Caco-2 (cell line): ENCODE measurements at regions of chr20 and their contacts with region 1.

Region 1: GRCh38 chr20:45392733-45393132 is 14.6 kb upstream of the TP53TG5 start:
- DNase-seq: peak in 1 of 2 experiments; percentile 46
- H3K4me3 ChIP-seq: no peak overlapping the region
- H3K4me3 Mint-ChIP-seq: no peak overlapping the region
- H3K27ac Mint-ChIP-seq: no peak overlapping the region
- H3K4me1 ChIP-seq: no peaks in the 10 kb centered on the region
- H3K4me1 Mint-ChIP-seq: no peaks in the 10 kb centered on the region
- H3K27me3 ChIP-seq: no peaks in the 10 kb centered on the region
- H3K27me3 Mint-ChIP-seq: peaks cover 2% of the 10 kb centered on the region
- CTCF ChIP-seq: no peak

Region 2: GRCh38 chr20:45283548-45284057 is 109.1 kb before region 1 on chr20:
- CTCF ChIA-PET with region 1: no interaction called
- POLR2A ChIA-PET with region 1: no interaction called
- intact Hi-C with region 1: no loop called
- DNase-seq: no peak
- H3K4me3 ChIP-seq: no peak overlapping the region
- H3K4me3 Mint-ChIP-seq: no peak overlapping the region
- H3K27ac Mint-ChIP-seq: no peak overlapping the region
- H3K4me1 ChIP-seq: no peaks in the 10 kb centered on the region
- H3K4me1 Mint-ChIP-seq: no peaks in the 10 kb centered on the region
- H3K27me3 ChIP-seq: no peaks in the 10 kb centered on the region; the same call in 1 of the 2 replicates
- H3K27me3 Mint-ChIP-seq: peaks cover 34% of the 10 kb centered on the region
- CTCF ChIP-seq: no peak

Region 3: GRCh38 chr20:45373353-45374100 is 19.2 kb before region 1 on chr20:
- CTCF ChIA-PET with region 1: interaction called, 11 read pairs
- POLR2A ChIA-PET with region 1: no interaction called
- intact Hi-C with region 1: no loop called
- DNase-seq: peak; percentile 85 to 90
- H3K4me3 ChIP-seq: no peak overlapping the region
- H3K4me3 Mint-ChIP-seq: peak overlapping the region; percentile 64
- H3K27ac Mint-ChIP-seq: no peak overlapping the region
- H3K4me1 ChIP-seq: no peaks in the 10 kb centered on the region
- H3K4me1 Mint-ChIP-seq: no peaks in the 10 kb centered on the region
- H3K27me3 ChIP-seq: no peaks in the 10 kb centered on the region
- H3K27me3 Mint-ChIP-seq: no peaks in the 10 kb centered on the region
- CTCF ChIP-seq: peak; percentile 90 to 93

Region 4: DNA sequence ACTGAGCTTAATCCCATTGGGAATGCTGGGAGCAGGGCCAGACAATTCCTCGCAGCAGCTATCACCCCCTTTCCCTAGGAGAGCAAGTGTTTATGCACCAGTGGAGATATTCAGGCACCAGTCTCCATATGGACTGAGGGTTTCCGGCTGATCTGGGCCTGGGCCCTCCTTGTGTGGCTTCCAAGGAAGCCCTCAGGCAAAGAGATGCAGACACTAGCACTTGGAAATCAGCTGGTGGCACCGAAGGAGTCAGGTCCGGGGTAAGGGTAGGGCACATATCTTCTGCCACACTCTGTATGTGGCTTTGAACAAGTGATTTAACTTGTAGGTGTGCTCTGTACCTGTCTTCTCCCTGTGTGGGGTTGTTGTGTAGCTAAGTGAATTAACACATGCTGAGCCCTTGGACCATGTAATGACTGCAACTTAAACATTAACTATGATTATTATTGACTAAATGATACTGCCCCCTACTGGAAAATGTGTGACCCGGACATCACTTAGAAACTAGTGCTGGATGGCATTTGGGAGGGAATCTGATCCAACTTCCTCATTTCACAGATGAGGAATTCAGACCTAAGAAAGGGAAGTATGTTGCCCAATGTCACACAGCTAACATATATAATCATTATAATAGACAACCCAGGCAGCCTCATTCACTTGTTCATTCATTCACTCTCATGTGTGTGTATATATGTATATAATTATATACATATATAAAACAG is 57.5 kb after region 1 on chr20:
- CTCF ChIA-PET with region 1: interaction called, 10 read pairs
- POLR2A ChIA-PET with region 1: no interaction called
- intact Hi-C with region 1: no loop called
- DNase-seq: peak in 1 of 2 experiments; percentile 61
- H3K4me3 ChIP-seq: no peak overlapping the region
- H3K4me3 Mint-ChIP-seq: no peak overlapping the region
- H3K27ac Mint-ChIP-seq: no peak overlapping the region
- H3K4me1 ChIP-seq: peaks cover 14% of the 10 kb centered on the region
- H3K4me1 Mint-ChIP-seq: peaks cover 12% of the 10 kb centered on the region
- H3K27me3 ChIP-seq: no peaks in the 10 kb centered on the region
- H3K27me3 Mint-ChIP-seq: no peaks in the 10 kb centered on the region
- CTCF ChIP-seq: peak; percentile 64 to 82